Transverse colon (tissue), 4 donors: ENCODE measurements at regions of chr11 and their contacts with region 1.

Region 1: GRCh38 chr11:132126973-132127899 is 756.8 kb downstream of the NTM start:
- DNase-seq: peak; percentile 12
- H3K4me3 ChIP-seq: peak overlapping the region in 3 of 4 donors; percentile 11 to 35 (median 23)
- H3K27ac ChIP-seq: peak overlapping the region in 3 of 4 donors; percentile 7 to 36 (median 25)
- H3K4me1 ChIP-seq: peaks cover 0 to 18% (median 6%) of the 10 kb centered on the region in 4 donors
- H3K27me3 ChIP-seq: no peaks in the 10 kb centered on the region
- CTCF ChIP-seq: peak in 2 of 5 experiments; percentile 22 to 25
- EP300 ChIP-seq: no peak
- POLR2A ChIP-seq: no peak

Region 2: DNA sequence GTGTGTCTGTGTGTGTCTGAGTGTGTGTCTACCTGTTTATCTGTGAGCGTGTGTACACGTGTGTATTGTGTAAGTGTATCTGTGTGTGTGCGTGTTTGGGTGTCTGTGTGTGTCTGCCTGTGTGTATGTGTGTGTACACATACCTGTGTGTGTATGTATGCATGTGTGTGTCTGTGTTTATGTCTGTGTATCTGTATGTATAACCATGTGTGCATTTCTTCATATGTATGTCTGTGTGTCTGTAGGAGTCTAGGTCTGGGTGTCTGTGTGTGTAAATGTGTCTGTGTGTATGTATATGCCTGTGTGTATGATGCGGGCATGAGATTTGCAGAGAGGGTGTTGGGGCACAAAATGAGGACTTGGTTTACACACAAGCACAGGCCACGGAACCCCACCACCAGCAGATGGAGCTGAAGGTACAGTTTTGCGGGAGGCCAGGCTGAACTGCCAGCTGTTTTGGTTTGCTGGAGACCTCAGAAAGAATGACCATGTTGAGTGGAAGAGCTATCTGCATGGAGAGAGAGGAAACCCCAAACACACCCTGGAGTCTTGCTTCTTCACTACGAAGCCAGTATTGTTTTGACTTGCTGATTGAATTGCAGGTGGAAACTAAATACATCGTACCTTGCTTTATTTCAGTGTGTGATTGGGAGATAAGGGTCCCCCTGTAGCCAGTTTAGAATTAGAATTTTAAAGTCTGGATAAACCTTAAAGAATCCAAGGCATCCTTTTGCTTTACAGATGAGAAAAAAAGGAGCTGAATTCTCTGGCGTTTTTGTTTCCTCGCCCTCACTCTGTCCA is 259.6 kb before region 1 on chr11:
- in situ Hi-C with region 1: loop called in 2 of 4 experiments (anchors 5 to 25 kb)
- intact Hi-C with region 1: no loop called
- DNase-seq: peak; percentile 47
- H3K4me3 ChIP-seq: no peak overlapping the region
- H3K27ac ChIP-seq: no peak overlapping the region
- H3K4me1 ChIP-seq: no peaks in the 10 kb centered on the region
- H3K27me3 ChIP-seq: no peaks in the 10 kb centered on the region
- CTCF ChIP-seq: peak; percentile 44 to 56 (median 52)
- EP300 ChIP-seq: no peak
- POLR2A ChIP-seq: no peak